Mammary epithelial cell (primary cell): ENCODE measurements at regions of chr1 and their contacts with region 1.

Region 1: GRCh38 chr1:150186789-150187559 is 37.3 kb downstream of the PLEKHO1 start:
- DNase-seq: peak; percentile 23
- H3K4me3 ChIP-seq: no peak overlapping the region
- H3K27ac ChIP-seq: no peak overlapping the region
- H3K4me1 ChIP-seq: peaks cover 4% of the 10 kb centered on the region
- H3K27me3 ChIP-seq: no peaks in the 10 kb centered on the region
- CTCF ChIP-seq: peak; percentile 29 to 57

Region 2: GRCh38 chr1:149886396-149887195 is 300.4 kb before region 1 on chr1:
- CTCF ChIA-PET with region 1: interaction called, 3 read pairs
- dilution Hi-C with region 1: no loop called
- in situ Hi-C with region 1: no loop called
- intact Hi-C with region 1: loop called (anchors 1 kb)
- DNase-seq: peak; percentile 99
- H3K4me3 ChIP-seq: peak overlapping the region; percentile 58 to 68 (median 66)
- H3K27ac ChIP-seq: peak overlapping the region; percentile 75
- H3K4me1 ChIP-seq: peaks cover 14% of the 10 kb centered on the region
- H3K27me3 ChIP-seq: no peaks in the 10 kb centered on the region
- CTCF ChIP-seq: no peak

Region 3: GRCh38 chr1:150051089-150051373 is 135.9 kb before region 1 on chr1:
- CTCF ChIA-PET with region 1: no interaction called
- dilution Hi-C with region 1: no loop called
- in situ Hi-C with region 1: no loop called
- intact Hi-C with region 1: no loop called
- DNase-seq: no peak
- H3K4me3 ChIP-seq: no peak overlapping the region
- H3K27ac ChIP-seq: no peak overlapping the region
- H3K4me1 ChIP-seq: no peaks in the 10 kb centered on the region
- H3K27me3 ChIP-seq: no peaks in the 10 kb centered on the region
- CTCF ChIP-seq: no peak

Region 4: GRCh38 chr1:150067184-150068036 is 119.6 kb before region 1 on chr1 and contains the start of gene VPS45:
- CTCF ChIA-PET with region 1: interaction called, 15 read pairs
- dilution Hi-C with region 1: no loop called
- in situ Hi-C with region 1: no loop called
- intact Hi-C with region 1: loop called (anchors 5 kb)
- DNase-seq: peak; percentile 86
- H3K4me3 ChIP-seq: peak within 1 kb of the TSS; percentile 68 to 81 (median 73)
- H3K27ac ChIP-seq: peak within 1 kb of the TSS; percentile 83
- H3K4me1 ChIP-seq: peaks cover 15% of the 10 kb centered on the region
- H3K27me3 ChIP-seq: no peaks in the 10 kb centered on the region
- CTCF ChIP-seq: no peak
- total RNA-seq, gene VPS45: 30.0 to 42.2 TPM

Region 5: GRCh38 chr1:150072959-150073358 is 114.0 kb before region 1 on chr1:
- CTCF ChIA-PET with region 1: interaction called, 21 read pairs
- dilution Hi-C with region 1: no loop called
- in situ Hi-C with region 1: no loop called
- intact Hi-C with region 1: loop called (anchors 5 kb)
- DNase-seq: no peak
- H3K4me3 ChIP-seq: no peak overlapping the region
- H3K27ac ChIP-seq: no peak overlapping the region
- H3K4me1 ChIP-seq: peaks cover 5% of the 10 kb centered on the region
- H3K27me3 ChIP-seq: no peaks in the 10 kb centered on the region
- CTCF ChIP-seq: peak; percentile 33 to 35

Region 6: GRCh38 chr1:151070474-151071276 is 883.7 kb after region 1 on chr1 and contains the start of gene GABPB2:
- CTCF ChIA-PET with region 1: interaction called, 38 read pairs
- dilution Hi-C with region 1: no loop called
- in situ Hi-C with region 1: no loop called
- intact Hi-C with region 1: no loop called
- DNase-seq: peak; percentile 93
- H3K4me3 ChIP-seq: peak within 1 kb of the TSS; percentile 76 to 95 (median 84)
- H3K27ac ChIP-seq: peak within 1 kb of the TSS; percentile 91
- H3K4me1 ChIP-seq: peaks cover 12% of the 10 kb centered on the region
- H3K27me3 ChIP-seq: no peaks in the 10 kb centered on the region
- CTCF ChIP-seq: peak; percentile 62 to 94
- total RNA-seq, gene GABPB2: 9.2 to 10.7 TPM